PC-3 (cell line): ENCODE measurements at regions of chr12 and their contacts with region 1.

Region 1: GRCh38 chr12:13255792-13256691 is 59.5 kb downstream of the EMP1 start:
- DNase-seq: peak; percentile 91
- ATAC-seq: peak; percentile 100
- H3K4me3 ChIP-seq: peak overlapping the region; percentile 53
- H3K27ac ChIP-seq: no peak overlapping the region
- H3K4me1 ChIP-seq: no peaks in the 10 kb centered on the region
- H3K27me3 ChIP-seq: no peaks in the 10 kb centered on the region
- CTCF ChIP-seq: peak; percentile 91

Region 2: DNA sequence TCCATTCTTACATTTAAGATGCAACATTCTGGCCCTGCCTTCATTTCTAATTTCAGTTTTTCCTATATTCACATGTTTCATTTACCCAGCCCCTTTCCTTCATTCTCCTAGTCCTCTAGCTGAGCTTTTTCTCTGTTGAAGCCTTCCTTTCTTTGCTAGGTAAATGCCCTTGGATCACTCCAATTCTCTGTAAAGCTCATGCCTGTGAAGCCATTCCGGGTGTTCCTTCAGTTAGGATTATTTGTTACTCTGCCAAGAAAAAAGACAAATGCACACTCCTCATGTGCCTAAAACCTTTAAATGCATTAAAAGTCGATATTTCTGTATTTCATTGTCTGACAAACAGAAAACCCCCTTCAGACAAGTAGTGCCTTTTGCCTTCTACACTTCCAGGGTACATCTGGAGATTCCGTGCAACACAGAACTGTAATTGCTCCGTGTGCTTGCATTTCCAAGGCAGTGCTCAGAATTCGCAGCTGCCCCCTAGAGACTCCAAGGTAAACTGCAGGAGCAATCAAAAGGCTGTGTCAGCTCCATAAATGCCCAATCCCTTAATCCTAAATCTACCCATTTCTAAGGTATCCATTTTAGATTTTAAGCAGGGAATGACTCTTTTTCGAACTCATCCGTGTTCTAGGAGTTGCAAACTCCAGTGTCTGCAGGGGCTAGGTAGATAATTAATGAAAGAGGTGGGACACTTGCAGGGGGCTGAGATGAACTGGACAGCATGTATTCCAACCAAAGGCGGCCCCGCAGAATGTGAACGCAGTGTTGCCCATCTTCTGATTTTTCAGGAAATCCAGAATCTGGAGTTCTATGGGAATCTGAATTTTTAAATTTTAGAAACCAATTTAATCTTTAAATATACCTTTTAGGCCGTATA is 405.2 kb after region 1 on chr12:
- CTCF ChIA-PET with region 1: interaction called, 3 read pairs
- POLR2A ChIA-PET with region 1: no interaction called
- intact Hi-C with region 1: loop called (anchors 5 kb)
- DNase-seq: peak; percentile 53
- ATAC-seq: peak; percentile 49; the same call in 1 of the 2 replicates
- H3K4me3 ChIP-seq: no peak overlapping the region
- H3K27ac ChIP-seq: no peak overlapping the region
- H3K4me1 ChIP-seq: no peaks in the 10 kb centered on the region
- H3K27me3 ChIP-seq: peaks cover 35% of the 10 kb centered on the region
- CTCF ChIP-seq: peak; percentile 64

Region 3: GRCh38 chr12:13941258-13942249 is 685.5 kb after region 1 on chr12:
- CTCF ChIA-PET with region 1: interaction called, 3 read pairs
- POLR2A ChIA-PET with region 1: no interaction called
- intact Hi-C with region 1: loop called (anchors 10 kb)
- DNase-seq: peak; percentile 72
- ATAC-seq: peak; percentile 74
- H3K4me3 ChIP-seq: no peak overlapping the region
- H3K27ac ChIP-seq: no peak overlapping the region
- H3K4me1 ChIP-seq: peaks cover 3% of the 10 kb centered on the region; the same call in 1 of the 2 replicates
- H3K27me3 ChIP-seq: no peaks in the 10 kb centered on the region
- CTCF ChIP-seq: peak; percentile 55

Region 4: DNA sequence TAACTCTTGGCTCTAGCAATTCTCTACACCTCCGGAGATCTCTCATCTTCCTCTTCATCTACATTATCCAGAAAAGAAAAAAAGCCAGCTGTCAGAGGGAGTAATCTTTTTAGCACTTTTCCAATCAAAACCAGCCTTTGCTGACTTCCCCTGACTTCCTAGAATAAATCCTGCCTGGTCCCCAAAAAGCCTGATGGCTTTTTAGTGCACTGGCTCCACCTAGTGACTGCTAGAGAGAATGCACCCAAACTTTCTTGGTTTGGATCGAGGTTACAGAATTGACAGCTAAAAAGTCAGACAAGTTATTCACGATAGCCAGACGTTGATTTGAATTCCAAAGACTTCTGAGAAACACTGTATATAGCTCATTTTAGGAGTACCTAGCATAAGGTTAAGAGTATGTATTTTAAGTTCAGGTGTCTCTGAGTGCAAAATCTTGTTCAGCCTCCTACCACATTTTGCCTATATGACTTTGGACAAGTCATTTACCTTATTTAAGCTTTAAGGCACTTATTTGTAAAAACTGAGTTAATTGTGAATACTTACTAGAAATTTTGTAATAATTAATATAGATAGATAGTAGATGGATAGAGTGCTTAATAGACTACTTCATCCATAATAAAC is 911.1 kb after region 1 on chr12:
- CTCF ChIA-PET with region 1: no interaction called
- POLR2A ChIA-PET with region 1: no interaction called
- intact Hi-C with region 1: loop called (anchors 10 kb)
- DNase-seq: peak; percentile 73
- ATAC-seq: no peak
- H3K4me3 ChIP-seq: no peak overlapping the region
- H3K27ac ChIP-seq: no peak overlapping the region
- H3K4me1 ChIP-seq: no peaks in the 10 kb centered on the region
- H3K27me3 ChIP-seq: no peaks in the 10 kb centered on the region
- CTCF ChIP-seq: peak; percentile 86